ENCODE measurements at regions of chr18 and their contacts with region 1.

Region 1: DNA sequence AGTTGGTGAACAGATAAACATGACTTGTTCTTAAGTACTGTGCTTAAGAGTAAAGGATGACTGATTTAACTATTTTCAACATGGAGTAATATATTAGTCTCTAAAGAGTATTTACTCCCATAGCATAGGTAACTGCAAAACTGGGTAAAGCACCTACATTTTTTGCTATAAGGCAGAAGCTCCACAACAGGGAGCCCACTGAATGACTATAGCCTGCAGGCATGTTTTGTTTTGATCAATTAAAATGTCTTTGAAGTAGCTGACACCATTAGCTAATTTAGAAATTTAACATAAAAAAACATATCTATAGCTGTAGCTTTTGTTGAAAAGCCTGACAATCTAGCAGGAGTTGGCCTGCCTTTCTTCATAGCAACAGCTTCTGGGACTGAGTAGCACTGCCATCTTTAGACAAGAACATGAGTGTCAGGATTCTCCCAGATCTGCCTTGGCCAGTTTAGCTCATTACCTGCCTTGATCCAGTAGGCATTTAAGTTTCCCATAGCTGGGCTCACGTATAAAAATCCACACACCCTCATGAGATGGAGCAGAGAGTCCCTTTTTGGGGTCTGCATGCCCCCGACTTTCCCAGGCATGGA is 1935.1 kb upstream of the PIK3C3 start:
- DNase-seq: no peak
- ATAC-seq: no peak
- H3K4me3 ChIP-seq: no peak overlapping the region
- H3K27ac ChIP-seq: no peak overlapping the region
- H3K4me1 ChIP-seq: no peaks in the 10 kb centered on the region
- H3K27me3 ChIP-seq: no peaks in the 10 kb centered on the region
- CTCF ChIP-seq: no peak

Region 2: GRCh38 chr18:39966275-39966674 is 53.6 kb before region 1 on chr18:
- intact Hi-C with region 1: loop called in 1 of 10 experiments (anchors 10 kb)
- DNase-seq: no peak
- ATAC-seq: no peak
- H3K4me3 ChIP-seq: no peak overlapping the region
- H3K27ac ChIP-seq: no peak overlapping the region
- H3K4me1 ChIP-seq: no peaks in the 10 kb centered on the region
- H3K27me3 ChIP-seq: no peaks in the 10 kb centered on the region
- CTCF ChIP-seq: peak in 1 of 9 donors; percentile 11

Region 3: DNA sequence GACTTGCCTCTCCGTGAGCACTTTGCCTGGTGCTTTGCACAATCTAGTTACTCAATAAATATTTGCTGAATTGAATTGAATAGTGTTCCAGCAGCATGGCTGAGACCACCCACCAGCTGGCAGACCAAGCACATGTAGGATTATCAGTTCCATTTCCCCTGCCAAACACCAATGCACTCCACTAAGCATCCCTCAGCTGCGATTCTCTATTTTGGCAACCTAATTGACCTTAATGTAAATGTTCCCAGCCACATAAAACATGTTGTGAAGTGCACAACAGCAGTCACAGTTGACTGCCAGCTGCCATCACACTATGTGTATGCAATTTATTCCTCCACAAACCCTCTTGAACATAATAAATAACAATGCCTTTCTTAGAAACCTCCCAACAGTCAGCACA is 55.7 kb after region 1 on chr18:
- intact Hi-C with region 1: loop called in 1 of 10 experiments (anchors 1 kb)
- DNase-seq: no peak
- ATAC-seq: no peak
- H3K4me3 ChIP-seq: no peak overlapping the region
- H3K27ac ChIP-seq: no peak overlapping the region
- H3K4me1 ChIP-seq: no peaks in the 10 kb centered on the region
- H3K27me3 ChIP-seq: no peaks in the 10 kb centered on the region
- CTCF ChIP-seq: no peak

Region 4: GRCh38 chr18:40371673-40372072 is 351.8 kb after region 1 on chr18:
- intact Hi-C with region 1: no loop called
- DNase-seq: no peak
- ATAC-seq: no peak
- H3K4me3 ChIP-seq: no peak overlapping the region
- H3K27ac ChIP-seq: no peak overlapping the region
- H3K4me1 ChIP-seq: no peaks in the 10 kb centered on the region
- H3K27me3 ChIP-seq: no peaks in the 10 kb centered on the region
- CTCF ChIP-seq: no peak